ENCODE measurements at regions of chr3 and their contacts with region 1.

Region 1: DNA sequence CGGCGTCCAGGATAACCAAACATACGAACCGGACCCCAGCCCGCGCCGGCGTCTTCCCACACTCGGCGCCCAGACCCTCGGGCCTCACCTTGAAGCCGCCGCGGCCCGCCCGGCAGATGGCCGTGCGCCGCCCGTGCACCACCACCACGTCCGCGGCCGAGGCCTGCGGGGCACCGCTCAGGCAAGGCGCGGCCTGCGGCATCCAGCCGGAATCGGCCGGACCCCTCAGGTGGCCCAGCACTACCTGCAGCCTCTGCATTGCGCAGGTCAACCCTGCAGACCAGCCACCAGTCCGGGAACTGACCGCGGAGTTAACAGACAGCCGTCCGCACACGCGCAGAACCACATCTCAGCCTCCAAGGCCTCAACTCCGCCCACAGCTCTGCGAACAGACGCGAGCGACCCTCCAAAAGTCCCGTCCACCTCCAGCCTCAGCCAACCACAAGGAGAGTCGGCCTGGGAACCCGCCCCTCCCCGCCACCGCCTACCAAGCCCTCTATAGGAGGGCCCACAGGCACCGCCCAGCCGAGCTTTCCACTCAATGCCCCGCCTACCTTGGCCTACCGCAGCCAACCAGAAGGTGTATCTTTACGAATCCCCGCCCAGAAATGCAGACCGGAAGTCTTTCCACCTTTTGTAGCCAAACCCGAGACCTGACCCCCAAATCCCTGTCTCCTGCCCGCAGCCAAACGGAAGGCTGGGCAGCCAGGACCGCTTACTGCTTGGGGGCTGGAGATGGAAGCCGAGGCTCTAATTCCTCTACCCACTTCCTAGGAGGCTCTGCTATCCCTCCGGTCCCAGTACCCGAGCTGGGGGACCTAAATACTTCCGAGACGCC is at the start of gene ACAA1:
- DNase-seq: peak; percentile 96
- H3K4me3 Mint-ChIP-seq: peak within 1 kb of the TSS; percentile 85
- H3K27ac Mint-ChIP-seq: peak within 1 kb of the TSS; percentile 98
- H3K4me1 Mint-ChIP-seq: peaks cover 50% of the 10 kb centered on the region
- H3K27me3 Mint-ChIP-seq: no peaks in the 10 kb centered on the region
- total RNA-seq, gene ACAA1: 68.6 and 69.5 TPM in 2 replicates

Region 2: DNA sequence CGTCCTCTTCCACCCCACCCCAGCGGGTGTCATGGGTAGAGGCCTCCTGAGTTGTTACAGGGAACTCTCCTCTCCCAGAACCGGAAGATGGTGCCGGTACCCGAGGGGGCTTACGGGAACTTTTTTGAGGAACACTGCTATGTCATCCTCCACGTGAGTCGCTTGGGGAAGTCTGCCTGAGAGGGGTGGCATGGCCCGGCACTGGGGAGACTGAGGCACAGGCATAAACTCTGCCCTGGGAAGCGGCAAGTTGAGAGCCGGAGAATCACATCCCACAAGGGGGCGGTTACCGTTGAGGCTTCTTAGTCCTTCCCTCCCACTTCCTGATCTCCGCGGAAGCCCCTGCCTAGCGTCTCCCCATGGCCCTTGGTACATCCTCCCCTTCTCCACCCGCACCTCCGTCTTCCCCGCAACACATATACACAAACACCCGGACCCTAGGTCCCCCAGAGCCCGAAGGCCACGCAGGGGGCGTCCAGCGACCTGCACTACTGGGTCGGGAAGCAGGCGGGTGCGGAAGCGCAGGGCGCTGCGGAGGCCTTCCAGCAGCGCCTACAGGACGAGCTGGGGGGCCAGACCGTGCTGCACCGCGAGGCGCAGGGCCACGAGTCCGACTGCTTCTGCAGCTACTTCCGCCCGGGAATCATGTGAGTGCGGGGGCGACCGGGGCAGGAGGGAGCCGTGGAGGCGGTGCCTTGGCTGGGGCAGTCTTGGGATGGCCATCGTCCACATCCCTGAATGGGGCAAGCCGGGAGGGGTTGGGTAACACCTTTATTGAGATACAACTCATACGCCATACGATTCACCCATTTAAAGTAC is 143.0 kb before region 1 on chr3:
- intact Hi-C with region 1: loop called (anchors 2 kb)
- DNase-seq: peak; percentile 54
- H3K4me3 Mint-ChIP-seq: peak overlapping the region; percentile 83
- H3K27ac Mint-ChIP-seq: peak overlapping the region; percentile 87
- H3K4me1 Mint-ChIP-seq: peaks cover 43% of the 10 kb centered on the region
- H3K27me3 Mint-ChIP-seq: no peaks in the 10 kb centered on the region

Region 3: DNA sequence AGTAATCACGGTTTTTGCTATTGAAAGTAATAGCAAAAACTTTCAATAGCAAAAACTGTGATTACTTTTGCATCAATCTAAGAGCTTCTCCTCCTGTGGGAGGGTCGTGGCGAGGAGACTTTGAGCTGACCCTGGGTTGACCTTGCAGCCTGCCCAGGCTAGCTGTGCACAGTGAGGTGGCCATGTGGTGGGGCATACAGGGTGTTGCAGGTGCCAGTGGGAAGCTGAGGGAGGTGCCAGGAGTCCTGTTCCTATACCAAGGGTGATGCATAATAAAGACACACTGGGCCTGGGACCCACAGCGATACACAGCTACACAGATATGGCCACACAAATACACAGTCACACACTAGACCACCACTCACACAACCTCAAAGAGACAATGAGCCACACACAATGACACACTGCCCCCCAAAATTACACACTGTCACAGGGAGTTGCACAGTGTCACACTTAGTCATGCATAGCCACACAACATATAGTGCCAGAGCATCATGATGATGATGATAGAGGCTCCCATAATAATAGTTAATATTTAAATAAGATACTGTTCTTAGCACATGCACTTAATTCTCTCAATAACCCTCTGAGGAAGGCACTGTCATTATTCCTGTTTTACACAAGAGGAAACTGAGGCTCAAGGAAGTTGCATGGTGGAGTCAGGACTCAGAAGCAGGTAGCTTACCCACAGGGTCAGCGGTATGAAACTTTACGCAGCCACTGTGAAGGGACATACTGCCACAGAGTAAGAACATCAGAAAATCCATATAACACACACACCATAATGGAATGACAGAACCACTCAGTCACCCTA is 113.9 kb before region 1 on chr3:
- intact Hi-C with region 1: no loop called
- DNase-seq: no peak
- H3K4me3 Mint-ChIP-seq: peak overlapping the region; percentile 98
- H3K27ac Mint-ChIP-seq: peak overlapping the region; percentile 98
- H3K4me1 Mint-ChIP-seq: peaks cover 15% of the 10 kb centered on the region
- H3K27me3 Mint-ChIP-seq: peaks cover 15% of the 10 kb centered on the region

Region 4: DNA sequence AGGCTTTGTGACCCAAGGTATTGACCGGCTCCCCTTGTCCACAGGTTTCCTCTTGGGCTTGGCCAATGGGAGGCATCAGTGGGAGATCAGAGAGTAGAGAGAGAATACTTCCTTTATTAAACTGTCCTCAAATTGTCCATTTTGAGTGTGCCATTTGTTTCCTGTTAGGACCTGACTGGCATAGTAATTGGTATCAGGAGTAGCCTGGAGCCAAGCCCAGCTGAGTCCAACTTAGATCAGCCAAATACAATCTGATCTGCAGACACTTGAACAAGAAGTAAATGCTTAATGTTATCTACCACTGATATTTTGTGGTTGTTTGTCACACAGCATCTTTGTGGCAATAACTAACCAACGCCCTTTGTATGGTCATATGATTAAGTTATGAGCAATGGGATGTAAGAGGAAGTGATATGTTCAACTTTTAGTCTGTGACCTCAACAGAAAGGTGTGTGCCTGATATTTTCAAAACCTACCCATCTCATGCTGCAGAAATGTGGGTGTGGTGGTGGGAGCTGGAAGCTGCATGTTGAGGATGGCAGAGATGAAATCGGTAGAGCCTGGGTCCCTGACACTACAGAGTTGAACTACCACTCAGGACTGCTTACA is 14.8 kb after region 1 on chr3:
- intact Hi-C with region 1: loop called (anchors 1 kb)
- DNase-seq: no peak
- H3K4me3 Mint-ChIP-seq: no peak overlapping the region
- H3K27ac Mint-ChIP-seq: peak overlapping the region; percentile 51
- H3K4me1 Mint-ChIP-seq: peaks cover 40% of the 10 kb centered on the region
- H3K27me3 Mint-ChIP-seq: no peaks in the 10 kb centered on the region

Region 5: DNA sequence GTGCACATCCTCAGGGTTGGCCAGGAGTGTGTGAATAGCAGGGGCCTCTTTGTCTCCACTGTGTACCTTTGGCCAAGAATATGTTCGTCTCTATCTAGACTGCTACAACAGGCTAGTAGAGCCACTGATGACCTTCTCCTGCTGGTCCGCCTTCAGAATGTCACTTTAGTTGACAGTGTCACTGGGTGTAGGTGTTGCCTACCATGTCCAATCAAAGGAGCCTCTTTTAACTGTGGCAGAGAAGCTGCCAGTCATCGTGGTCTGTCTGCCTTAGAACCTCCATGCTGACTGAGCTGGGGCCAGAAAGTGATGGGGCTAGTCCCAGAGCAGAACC is 68.4 kb after region 1 on chr3:
- intact Hi-C with region 1: loop called (anchors 1 kb)
- DNase-seq: peak; percentile 16
- H3K4me3 Mint-ChIP-seq: peak overlapping the region; percentile 14
- H3K27ac Mint-ChIP-seq: peak overlapping the region; percentile 80
- H3K4me1 Mint-ChIP-seq: peaks cover 62% of the 10 kb centered on the region
- H3K27me3 Mint-ChIP-seq: no peaks in the 10 kb centered on the region

Region 6: GRCh38 chr3:38247366-38248035 is 110.5 kb after region 1 on chr3:
- intact Hi-C with region 1: no loop called
- DNase-seq: no peak
- H3K4me3 Mint-ChIP-seq: no peak overlapping the region
- H3K27ac Mint-ChIP-seq: peak overlapping the region; percentile 13
- H3K4me1 Mint-ChIP-seq: peaks cover 4% of the 10 kb centered on the region
- H3K27me3 Mint-ChIP-seq: no peaks in the 10 kb centered on the region

Region 7: GRCh38 chr3:38346587-38347410 is 209.8 kb after region 1 on chr3 and contains the start of gene XYLB:
- intact Hi-C with region 1: loop called (anchors 2 kb)
- DNase-seq: peak; percentile 76
- H3K4me3 Mint-ChIP-seq: peak within 1 kb of the TSS; percentile 78
- H3K27ac Mint-ChIP-seq: peak within 1 kb of the TSS; percentile 66
- H3K4me1 Mint-ChIP-seq: peaks cover 8% of the 10 kb centered on the region
- H3K27me3 Mint-ChIP-seq: peaks cover 3% of the 10 kb centered on the region
- total RNA-seq, gene XYLB: 8.6 and 11.8 TPM in 2 replicates

Region 8: DNA sequence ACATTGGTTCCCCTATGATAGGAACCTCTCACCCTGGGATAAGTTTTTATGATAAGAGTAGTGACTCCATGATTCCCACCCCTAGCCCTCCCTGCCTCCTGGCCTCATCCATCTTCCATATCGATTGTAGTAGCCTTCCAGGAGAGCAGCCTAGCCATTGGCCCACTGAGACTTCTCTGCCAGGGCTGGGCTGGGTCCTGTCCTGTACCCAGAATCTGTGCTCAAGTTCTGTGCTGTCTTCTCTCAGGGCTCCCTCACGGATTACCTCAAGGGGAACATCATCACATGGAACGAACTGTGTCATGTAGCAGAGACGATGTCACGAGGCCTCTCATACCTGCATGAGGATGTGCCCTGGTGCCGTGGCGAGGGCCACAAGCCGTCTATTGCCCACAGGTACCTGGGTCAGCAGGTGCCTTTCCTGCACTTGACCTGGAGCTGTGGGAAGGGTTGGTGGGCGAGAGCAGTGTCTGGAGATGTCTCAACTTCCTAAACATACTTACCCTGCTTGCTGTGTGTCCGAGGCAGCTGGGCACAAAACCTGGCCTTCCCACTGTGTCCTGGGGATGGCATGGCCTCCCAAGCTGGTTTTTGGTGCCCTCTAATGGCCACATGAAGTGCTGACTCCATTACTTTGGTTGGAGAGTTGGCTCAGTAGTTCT is 342.6 kb after region 1 on chr3:
- intact Hi-C with region 1: loop called (anchors 5 kb)
- DNase-seq: no peak
- H3K4me3 Mint-ChIP-seq: no peak overlapping the region
- H3K27ac Mint-ChIP-seq: no peak overlapping the region
- H3K4me1 Mint-ChIP-seq: peaks cover 2% of the 10 kb centered on the region
- H3K27me3 Mint-ChIP-seq: no peaks in the 10 kb centered on the region

Measured in activated T-helper 2 cell treated with anti-CD3 and anti-CD28 coated beads, Interferon-gamma antibody, Interleukin-2, Interleukin-4, amounts not matched to agents 10 μg/mL and 5 μg/mL and 100 μg/mL, durations not matched to agents 14 hours and 24 hours and 36 hours (primary cell).